ENCODE measurements at regions of chr3 and their contacts with region 1.

Region 1: GRCh38 chr3:149969940-149970715 is 567 bp downstream of the PFN2 start:
- DNase-seq: peak; percentile 54 to 81 (median 75)
- ATAC-seq: peak; percentile 64
- H3K4me3 ChIP-seq: peak overlapping the region; percentile 53
- H3K4me3 Mint-ChIP-seq: peak overlapping the region; percentile 85 to 96 (median 92)
- H3K27ac ChIP-seq: peak overlapping the region; percentile 63
- H3K27ac Mint-ChIP-seq: peak overlapping the region in 8 of 9 donors; percentile 60 to 94 (median 86)
- H3K4me1 ChIP-seq: peaks cover 0 to 4% of the 10 kb centered on the region in 2 donors
- H3K4me1 Mint-ChIP-seq: peaks cover 16 to 26% (median 20%) of the 10 kb centered on the region in 7 donors
- H3K27me3 ChIP-seq: peaks cover 0 to 5% of the 10 kb centered on the region in 2 donors
- H3K27me3 Mint-ChIP-seq: peaks cover 6 to 55% (median 26%) of the 10 kb centered on the region in 5 donors

Region 2: GRCh38 chr3:149752051-149752787 is 217.9 kb before region 1 on chr3 and contains the start of gene COMMD2:
- CTCF ChIA-PET with region 1: no interaction called
- POLR2A ChIA-PET with region 1: no interaction called
- intact Hi-C with region 1: loop called in 1 of 2 experiments (anchors 2 kb)
- DNase-seq: peak; percentile 52 to 76 (median 63)
- ATAC-seq: peak; percentile 91
- H3K4me3 ChIP-seq: peak within 1 kb of the TSS; percentile 81
- H3K4me3 Mint-ChIP-seq: peak within 1 kb of the TSS; percentile 94 to 98 (median 96)
- H3K27ac ChIP-seq: peak within 1 kb of the TSS; percentile 73
- H3K27ac Mint-ChIP-seq: peak within 1 kb of the TSS; percentile 90 to 97 (median 96)
- H3K4me1 ChIP-seq: peaks cover 9 to 20% of the 10 kb centered on the region in 2 donors
- H3K4me1 Mint-ChIP-seq: peaks cover 12 to 56% (median 32%) of the 10 kb centered on the region in 7 donors
- H3K27me3 ChIP-seq: no peaks in the 10 kb centered on the region
- H3K27me3 Mint-ChIP-seq: peaks cover 0 to 2% (median 0%) of the 10 kb centered on the region in 5 donors
- total RNA-seq, gene COMMD2: 29.9 to 44.4 (median 33.4) TPM

Region 3: GRCh38 chr3:149894205-149894604 is 75.9 kb before region 1 on chr3:
- CTCF ChIA-PET with region 1: no interaction called
- POLR2A ChIA-PET with region 1: no interaction called
- intact Hi-C with region 1: no loop called
- DNase-seq: no peak
- ATAC-seq: no peak
- H3K4me3 ChIP-seq: no peak overlapping the region
- H3K4me3 Mint-ChIP-seq: no peak overlapping the region
- H3K27ac ChIP-seq: no peak overlapping the region
- H3K27ac Mint-ChIP-seq: no peak overlapping the region
- H3K4me1 ChIP-seq: no peaks in the 10 kb centered on the region
- H3K4me1 Mint-ChIP-seq: peaks cover 4 to 34% (median 17%) of the 10 kb centered on the region in 7 donors
- H3K27me3 ChIP-seq: no peaks in the 10 kb centered on the region
- H3K27me3 Mint-ChIP-seq: no peaks in the 10 kb centered on the region

Region 4: DNA sequence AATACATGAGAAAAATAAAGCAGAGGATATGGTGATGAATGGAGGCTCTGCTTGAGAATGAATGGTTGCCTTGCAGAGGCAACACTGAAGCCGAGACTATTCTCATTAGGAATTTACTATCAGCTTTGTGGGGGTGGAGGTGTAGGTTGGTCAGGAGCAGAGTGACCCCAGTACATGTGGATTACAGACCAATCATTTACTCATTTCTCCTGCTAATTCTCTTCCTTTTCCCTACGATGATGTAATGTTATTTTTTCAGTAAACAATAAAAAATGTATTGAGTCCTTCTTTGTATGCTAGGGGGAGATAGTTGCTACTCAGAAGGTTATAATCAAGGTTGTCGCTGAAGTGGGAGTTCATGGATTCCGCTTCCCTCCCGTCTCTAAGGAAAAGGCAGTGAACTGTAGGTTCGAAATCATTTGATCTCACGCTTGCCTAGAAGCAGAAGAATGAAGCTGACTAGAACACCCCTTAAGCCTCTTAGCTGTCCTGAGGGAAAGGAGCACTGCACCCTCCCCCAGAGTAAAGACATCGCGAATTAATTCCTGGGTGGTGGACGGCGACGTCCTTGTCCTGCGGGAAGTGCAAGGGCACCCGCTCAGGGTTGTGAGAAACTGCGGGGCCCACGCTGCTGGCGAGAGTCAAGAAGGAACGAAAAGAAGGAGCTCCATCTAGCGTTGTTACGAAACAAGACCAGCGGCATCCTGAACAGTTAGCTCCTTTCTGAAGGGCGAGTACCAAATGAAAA is 213.7 kb after region 1 on chr3:
- CTCF ChIA-PET with region 1: interaction called, 25 read pairs
- POLR2A ChIA-PET with region 1: no interaction called
- intact Hi-C with region 1: loop called (anchors 1 kb)
- DNase-seq: peak; percentile 14 to 57 (median 39)
- ATAC-seq: peak; percentile 83
- H3K4me3 ChIP-seq: no peak overlapping the region
- H3K4me3 Mint-ChIP-seq: no peak overlapping the region
- H3K27ac ChIP-seq: no peak overlapping the region
- H3K27ac Mint-ChIP-seq: no peak overlapping the region
- H3K4me1 ChIP-seq: peaks cover 0 to 4% of the 10 kb centered on the region in 2 donors
- H3K4me1 Mint-ChIP-seq: no peaks in the 10 kb centered on the region
- H3K27me3 ChIP-seq: no peaks in the 10 kb centered on the region
- H3K27me3 Mint-ChIP-seq: peaks cover 14 to 32% (median 14%) of the 10 kb centered on the region in 5 donors

Region 5: GRCh38 chr3:150220799-150221198 is 250.7 kb after region 1 on chr3:
- CTCF ChIA-PET with region 1: interaction called, 19 read pairs
- POLR2A ChIA-PET with region 1: no interaction called
- intact Hi-C with region 1: loop called (anchors 1 to 2 kb)
- DNase-seq: no peak
- ATAC-seq: no peak
- H3K4me3 ChIP-seq: no peak overlapping the region
- H3K4me3 Mint-ChIP-seq: peak overlapping the region in 5 of 10 donors; percentile 6 to 71 (median 27)
- H3K27ac ChIP-seq: no peak overlapping the region
- H3K27ac Mint-ChIP-seq: no peak overlapping the region
- H3K4me1 ChIP-seq: no peaks in the 10 kb centered on the region
- H3K4me1 Mint-ChIP-seq: peaks cover 2 to 6% (median 4%) of the 10 kb centered on the region in 7 donors
- H3K27me3 ChIP-seq: no peaks in the 10 kb centered on the region
- H3K27me3 Mint-ChIP-seq: peaks cover 32 to 53% (median 42%) of the 10 kb centered on the region in 5 donors

Region 6: GRCh38 chr3:150703299-150704134 is 733.4 kb after region 1 on chr3 and contains the start of gene ERICH6:
- CTCF ChIA-PET with region 1: no interaction called
- POLR2A ChIA-PET with region 1: no interaction called
- intact Hi-C with region 1: loop called (anchors 5 to 10 kb)
- DNase-seq: peak; percentile 59 to 83 (median 71)
- ATAC-seq: peak; percentile 93
- H3K4me3 ChIP-seq: peak within 1 kb of the TSS; percentile 94
- H3K4me3 Mint-ChIP-seq: peak within 1 kb of the TSS; percentile 82 to 98 (median 97)
- H3K27ac ChIP-seq: peak within 1 kb of the TSS; percentile 84
- H3K27ac Mint-ChIP-seq: peak within 1 kb of the TSS; percentile 93 to 100 (median 97)
- H3K4me1 ChIP-seq: peaks cover 4 to 5% of the 10 kb centered on the region in 2 donors
- H3K4me1 Mint-ChIP-seq: peaks cover 11 to 24% (median 20%) of the 10 kb centered on the region in 7 donors
- H3K27me3 ChIP-seq: no peaks in the 10 kb centered on the region
- H3K27me3 Mint-ChIP-seq: peaks cover 0 to 6% (median 0%) of the 10 kb centered on the region in 5 donors
- total RNA-seq, gene ERICH6: 0.24 to 1.4 (median 0.53) TPM

Measured in naive thymus-derived CD4-positive, alpha-beta T cell (primary cell).